Left cardiac atrium (tissue), 4 donors: ENCODE measurements at regions of chr2 and their contacts with region 1.

Region 1: DNA sequence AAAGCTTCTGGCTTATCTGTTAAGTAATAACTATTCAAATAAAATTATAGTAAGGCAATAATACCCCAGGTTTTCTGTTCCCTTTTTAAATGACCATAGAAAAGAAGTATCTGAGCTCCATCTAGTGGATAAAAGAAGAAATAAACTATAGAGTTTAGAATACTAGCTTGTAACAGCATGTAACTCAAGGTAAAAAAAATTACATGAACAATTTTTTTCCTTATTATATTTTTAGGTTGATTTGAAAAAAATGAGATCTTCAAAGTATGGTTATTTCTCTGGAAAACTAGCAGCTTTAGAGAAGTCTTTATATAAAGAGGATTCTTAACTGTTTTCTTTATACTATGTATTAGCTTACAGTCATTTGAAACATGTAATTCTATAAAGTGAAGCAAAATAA is 58.1 kb downstream of the NCKAP1 start:
- DNase-seq: no peak
- ATAC-seq: peak in 1 of 2 donors; percentile 35

Region 2: DNA sequence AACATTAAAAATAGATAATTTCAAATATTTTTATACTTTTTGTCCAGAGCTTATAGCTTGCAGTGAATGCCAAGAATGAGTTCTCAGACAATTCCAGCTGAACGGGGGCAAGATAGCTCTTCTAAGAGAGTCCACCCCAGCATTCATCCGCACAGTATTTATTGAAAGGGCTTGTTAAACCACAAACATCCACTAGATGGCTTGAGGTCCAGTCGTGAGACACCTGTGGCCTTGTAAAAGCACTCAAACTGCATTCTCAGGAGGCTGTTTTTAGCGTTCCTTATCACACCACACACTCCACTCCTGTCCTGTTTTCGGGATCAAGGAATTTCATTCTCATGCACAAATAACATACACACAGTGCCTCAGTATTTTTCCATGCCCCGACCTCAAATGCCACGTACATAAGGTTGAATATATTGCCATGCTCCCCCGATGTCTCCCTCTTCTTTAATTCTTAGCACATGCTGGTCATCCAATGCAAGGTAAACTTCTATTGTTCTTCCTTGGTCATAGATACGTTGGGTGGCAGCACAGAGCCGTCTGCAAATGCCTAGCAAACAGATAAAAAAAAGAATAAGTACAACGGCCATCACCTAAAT is 216.7 kb before region 1 on chr2:
- intact Hi-C with region 1: loop called (anchors 2 to 10 kb)
- DNase-seq: no peak
- ATAC-seq: peak; percentile 56 to 68

Region 3: DNA sequence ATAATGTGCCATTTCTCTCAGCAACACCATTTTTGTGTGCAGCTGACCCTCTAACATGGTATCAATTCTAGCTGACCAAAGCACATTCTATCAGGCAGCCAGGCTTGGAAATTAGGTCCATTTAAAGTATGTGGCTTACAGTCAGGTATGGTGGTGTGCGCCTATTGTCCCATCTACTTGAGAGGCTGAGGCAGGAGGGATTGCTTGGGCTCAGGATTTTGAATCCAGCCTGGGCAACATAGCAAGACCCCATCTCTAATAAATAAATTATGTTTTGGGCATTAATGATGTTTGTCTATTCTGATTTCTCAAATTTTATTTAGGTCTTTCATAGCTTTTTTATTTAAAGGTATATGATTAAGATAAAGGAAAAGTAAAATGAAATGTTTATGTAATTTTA is 200.8 kb before region 1 on chr2:
- intact Hi-C with region 1: loop called in 1 of 2 experiments (anchors 5 kb)
- DNase-seq: no peak
- ATAC-seq: no peak

Region 4: DNA sequence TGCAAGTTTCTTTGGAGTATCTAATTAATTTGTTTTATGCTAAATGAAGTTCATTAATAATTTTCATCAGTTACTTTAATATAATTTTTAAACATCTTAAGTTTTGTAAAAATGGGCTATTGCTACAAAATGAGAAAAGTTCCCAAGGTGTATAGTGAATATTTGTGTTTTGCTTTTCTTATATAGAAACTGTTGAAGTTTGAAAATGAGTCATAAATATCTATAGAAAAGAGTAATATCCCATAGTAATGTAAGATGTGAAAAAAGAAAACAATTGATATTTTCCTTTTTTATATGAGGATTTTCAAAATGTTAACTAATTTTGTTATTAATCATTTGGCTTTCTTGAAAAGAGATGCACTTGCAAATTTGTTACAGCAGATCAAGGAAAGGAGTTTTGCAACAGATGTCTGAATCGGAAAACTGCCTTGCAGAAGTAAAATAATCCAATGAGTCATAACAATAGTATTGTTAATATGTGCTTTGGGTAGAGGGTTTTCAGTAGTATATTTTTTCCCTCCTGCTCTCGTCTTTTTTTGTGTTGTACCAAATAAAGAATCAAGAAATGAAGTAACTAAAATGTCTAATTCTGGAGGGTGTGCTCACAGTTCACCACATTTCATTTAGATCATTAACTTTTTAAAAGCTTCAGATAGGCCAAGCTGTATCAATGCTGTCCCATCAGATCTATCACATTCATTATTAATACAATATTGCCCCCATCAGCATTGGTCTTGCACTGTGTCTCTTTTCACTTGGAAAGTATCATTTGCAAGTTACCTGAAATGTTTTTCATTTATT is 113.9 kb after region 1 on chr2:
- intact Hi-C with region 1: no loop called
- DNase-seq: no peak
- ATAC-seq: no peak

Region 5: DNA sequence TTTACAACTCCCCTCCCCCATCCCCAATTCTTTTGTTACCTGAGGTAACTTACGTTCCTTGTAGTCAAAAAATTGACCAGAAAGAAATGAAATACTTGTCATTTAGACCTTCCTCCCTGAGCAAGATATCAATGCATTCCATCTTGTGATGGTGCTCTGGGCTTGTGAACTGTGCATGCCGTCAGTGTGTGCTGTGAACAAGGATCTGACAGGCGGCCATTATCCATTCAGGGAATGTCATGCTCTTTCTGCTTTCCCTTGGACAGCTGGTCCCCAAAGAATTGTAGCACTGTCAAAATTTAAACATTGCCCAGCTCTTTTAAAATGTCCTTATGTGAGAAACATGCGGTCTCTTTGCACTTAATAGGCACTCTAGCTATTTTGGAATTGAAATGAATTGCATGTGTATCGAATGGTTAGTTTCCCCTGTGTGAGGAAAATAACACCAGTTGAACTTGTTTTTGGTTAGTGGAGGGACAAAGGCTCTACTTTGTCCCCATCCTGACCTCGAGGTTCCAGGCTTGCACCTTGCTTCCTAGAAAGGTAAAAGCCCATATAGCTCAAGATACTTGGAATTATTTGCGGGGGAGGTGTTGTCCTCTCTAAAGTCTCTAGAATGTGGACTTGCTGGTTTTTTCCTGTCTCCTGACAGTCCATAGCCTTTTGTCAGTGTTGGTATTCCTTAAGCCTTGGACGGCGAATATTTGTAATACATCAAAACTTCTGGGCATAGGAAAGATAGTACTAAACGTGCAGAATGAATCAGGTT is 495.0 kb after region 1 on chr2:
- intact Hi-C with region 1: no loop called
- DNase-seq: no peak
- ATAC-seq: no peak